Posterior vena cava (tissue), 2 donors: ENCODE measurements at regions of chr10 and their contacts with region 1.

Region 1: GRCh38 chr10:102085336-102085735 is 20.2 kb downstream of the HPS6 start:
- DNase-seq: no peak

Region 2: DNA sequence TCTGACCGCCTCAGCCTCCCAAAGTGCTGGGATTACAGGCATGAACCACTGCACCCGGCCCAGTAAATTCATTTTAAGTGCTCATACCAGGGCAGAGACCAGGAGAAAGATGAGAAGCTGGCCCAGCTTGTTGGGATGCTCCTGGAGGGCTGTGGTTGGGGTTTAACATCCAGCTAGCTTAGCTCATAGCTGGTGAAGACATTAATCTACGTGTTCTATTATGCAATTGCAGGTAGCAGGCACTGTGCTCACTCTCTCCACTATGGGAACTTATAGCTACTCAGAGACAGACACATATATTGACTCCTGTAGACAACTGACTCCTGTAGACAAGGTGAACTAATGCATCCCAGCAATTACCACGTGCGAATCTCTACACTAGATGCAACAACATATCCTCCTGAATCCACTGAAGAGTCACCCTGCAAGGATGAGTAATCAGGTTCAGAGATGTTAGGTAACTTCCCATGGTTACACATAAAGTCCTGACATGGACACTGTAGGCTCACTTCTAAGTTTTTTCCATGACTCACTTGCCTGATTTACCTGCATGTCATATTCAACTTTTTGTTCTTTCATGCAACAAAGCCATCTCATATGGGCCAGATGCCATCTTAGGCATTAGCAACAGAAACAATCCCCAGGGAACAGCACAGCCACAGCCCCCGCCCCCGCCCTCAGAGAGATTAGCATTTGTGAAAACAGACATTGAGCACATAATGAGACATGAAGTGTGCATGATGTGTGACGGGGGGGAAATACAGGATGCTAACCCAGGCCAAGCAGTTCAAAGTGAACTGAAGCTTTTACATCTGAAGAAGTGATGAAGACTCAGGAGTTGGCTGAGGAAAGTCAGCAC is 1936.8 kb before region 1 on chr10:
- intact Hi-C with region 1: no loop called
- DNase-seq: no peak

Region 3: GRCh38 chr10:101995451-101996063 is 89.8 kb before region 1 on chr10:
- intact Hi-C with region 1: no loop called
- DNase-seq: no peak

Region 4: DNA sequence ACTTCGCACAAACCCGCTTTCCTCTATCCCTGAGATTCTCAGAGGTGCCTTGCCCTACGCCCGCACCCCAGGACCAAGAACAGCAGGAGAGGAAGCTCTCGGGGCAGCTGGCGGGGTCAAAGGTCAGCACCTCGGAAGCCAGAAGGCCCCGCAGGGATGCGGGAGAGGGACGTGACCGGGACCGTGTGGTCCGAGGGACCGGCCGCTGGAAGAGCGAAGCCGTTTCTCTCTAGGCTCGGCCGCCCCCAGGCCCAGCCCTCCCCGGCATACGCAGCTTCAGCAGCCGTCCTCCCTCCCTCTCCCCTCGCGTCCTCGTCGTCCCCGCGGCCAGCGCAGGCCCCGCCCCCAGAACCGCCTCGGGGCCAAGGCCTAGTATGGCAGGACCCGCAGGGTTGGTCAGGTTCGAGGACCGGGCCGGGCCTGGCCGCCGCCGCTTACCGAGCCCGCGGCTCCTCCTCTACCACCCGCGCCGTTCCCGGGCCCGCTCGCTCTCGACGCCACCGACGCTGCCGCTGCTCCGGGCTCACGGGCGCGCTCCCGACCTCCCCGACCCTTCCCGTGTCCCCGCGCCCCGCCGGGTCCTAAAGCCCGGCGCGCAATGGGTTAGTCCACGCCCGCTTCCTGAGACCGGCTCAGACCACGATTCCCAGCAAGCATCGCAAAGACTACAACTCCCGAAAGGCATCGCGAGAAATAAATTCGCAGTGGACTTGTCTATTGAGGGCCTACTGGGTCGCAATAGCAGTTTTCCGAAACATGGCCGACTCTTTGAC is 29.5 kb before region 1 on chr10 and contains the start of gene ARMH3:
- intact Hi-C with region 1: loop called in 1 of 2 experiments (anchors 1 kb)
- DNase-seq: peak; percentile 97
- total RNA-seq, gene ARMH3: 19.6 to 22.3 TPM